GM10248 (cell line): ENCODE measurements at regions of chr9 and their contacts with region 1.

Region 1: DNA sequence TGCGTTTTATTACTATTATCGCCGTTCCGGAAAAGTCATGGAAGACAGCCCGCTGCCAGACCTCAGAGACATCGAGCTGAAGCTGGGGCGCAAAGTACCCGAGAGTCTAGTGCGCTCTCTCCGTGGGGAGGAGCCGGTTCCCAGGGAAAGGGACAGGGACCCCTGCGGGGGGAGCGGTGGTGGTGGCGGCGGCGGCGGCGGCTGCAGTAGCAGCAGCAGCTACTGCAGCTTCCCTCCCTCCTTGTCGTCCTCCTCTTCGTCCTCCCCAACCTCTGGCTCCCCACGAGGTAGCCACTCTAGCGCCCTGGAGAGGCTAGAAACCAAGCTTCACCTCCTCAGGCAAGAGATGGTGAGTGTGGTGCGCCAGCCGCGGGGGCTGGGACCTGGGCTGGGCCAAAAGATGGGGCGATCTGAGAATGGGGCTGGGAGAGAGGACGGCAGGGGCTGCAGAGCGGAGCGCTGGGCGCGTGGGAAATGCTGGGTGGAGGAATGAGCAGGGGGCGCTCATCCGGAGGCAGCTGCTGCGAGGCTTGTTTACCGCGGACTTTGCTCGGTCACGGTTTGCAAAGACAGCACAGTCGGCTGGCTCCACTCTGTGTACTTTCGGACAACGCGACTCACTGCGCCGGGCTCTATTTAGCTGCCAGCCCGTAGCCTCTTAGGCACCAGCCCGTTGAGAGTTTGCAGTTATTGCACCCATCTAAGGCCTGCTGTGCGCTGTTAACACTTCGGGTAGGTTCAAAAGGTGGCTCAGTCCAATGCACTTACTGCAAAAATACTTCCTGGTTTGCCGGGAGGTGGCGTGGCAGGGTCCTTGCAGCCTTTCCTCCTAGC is 1.1 kb downstream of the LURAP1L start:
- DNase-seq: peak; percentile 46
- CTCF ChIP-seq: peak; percentile 52

Region 2: DNA sequence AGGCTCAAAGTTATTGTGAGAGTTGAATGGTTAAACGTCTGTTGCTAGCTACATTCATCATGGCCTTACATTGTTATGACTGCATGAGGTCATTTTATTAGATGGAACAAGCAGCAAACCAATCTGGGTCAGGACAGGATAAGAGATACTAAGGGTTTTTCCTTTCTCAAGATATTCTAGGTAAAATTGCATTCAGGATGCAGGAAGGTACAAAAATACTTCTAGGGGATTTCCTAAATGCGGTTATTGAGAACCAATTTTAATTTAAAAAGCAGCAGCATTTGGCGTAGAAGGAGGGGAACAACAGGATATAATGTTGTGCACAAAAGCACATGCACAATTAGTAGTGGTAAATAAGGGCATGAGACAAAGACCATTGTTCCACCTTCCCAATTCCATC is 40.2 kb before region 1 on chr9:
- CTCF ChIA-PET with region 1: interaction called, 11 read pairs
- POLR2A ChIA-PET with region 1: no interaction called
- DNase-seq: no peak
- CTCF ChIP-seq: no peak

Region 3: DNA sequence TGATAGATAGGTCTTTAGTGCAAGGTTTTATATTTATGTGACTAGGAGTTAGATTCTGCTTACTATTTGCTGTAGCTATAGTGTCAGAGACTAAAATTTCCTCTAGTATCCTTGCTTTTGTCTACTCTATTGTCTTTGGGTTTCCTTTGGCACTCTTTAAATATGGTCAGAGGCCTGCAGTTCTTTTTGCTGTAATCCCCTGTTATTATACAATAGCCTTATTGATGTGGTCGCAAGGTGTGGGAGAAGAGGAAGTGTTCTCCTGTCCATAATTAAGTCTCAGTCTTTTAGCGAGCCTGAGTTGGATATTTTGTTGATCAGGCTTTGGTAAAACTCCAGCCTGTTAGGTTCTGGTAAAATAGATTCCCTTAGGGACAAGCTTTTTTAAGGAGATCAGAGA is 33.8 kb after region 1 on chr9:
- CTCF ChIA-PET with region 1: interaction called, 13 read pairs
- POLR2A ChIA-PET with region 1: no interaction called
- DNase-seq: no peak
- CTCF ChIP-seq: no peak

Region 4: GRCh38 chr9:12838546-12838945 is 62.6 kb after region 1 on chr9:
- CTCF ChIA-PET with region 1: no interaction called
- POLR2A ChIA-PET with region 1: no interaction called
- DNase-seq: no peak
- CTCF ChIP-seq: no peak

Region 5: GRCh38 chr9:12916042-12916441 is 140.1 kb after region 1 on chr9:
- CTCF ChIA-PET with region 1: no interaction called
- POLR2A ChIA-PET with region 1: no interaction called
- DNase-seq: no peak
- CTCF ChIP-seq: no peak

Region 6: DNA sequence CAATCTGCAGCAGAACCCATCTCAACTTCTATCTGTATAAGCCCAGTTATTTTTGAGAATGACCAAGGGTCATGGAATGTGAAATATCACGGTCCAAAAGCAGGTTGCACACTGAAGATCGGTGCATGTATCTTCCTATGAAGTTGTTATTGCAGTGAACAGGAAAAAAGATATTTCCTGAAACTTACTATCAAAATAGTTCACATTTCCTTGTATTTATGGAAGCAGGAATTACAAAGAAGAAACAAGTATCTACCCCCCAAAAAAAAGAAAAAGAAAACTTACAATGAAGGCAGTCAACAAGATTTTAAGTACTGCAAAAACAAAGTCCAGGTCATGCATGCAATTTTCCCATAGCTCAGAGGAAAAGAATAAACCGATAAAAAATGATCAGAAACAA is 433.6 kb after region 1 on chr9:
- CTCF ChIA-PET with region 1: no interaction called
- POLR2A ChIA-PET with region 1: no interaction called
- DNase-seq: no peak
- CTCF ChIP-seq: no peak